Pancreas (tissue), 10 donors: ENCODE measurements at regions of chr1 and their contacts with region 1.

Region 1: GRCh38 chr1:1291548-1292441 is 11.6 kb downstream of the SCNN1D start:
- DNase-seq: peak; percentile 73 to 94 (median 82)
- ATAC-seq: peak; percentile 84 to 91 (median 88)
- H3K4me3 ChIP-seq: no peak overlapping the region
- H3K27ac ChIP-seq: no peak overlapping the region
- H3K4me1 ChIP-seq: no peaks in the 10 kb centered on the region
- H3K27me3 ChIP-seq: no peaks in the 10 kb centered on the region
- CTCF ChIP-seq: peak; percentile 63 to 71 (median 64)

Region 2: DNA sequence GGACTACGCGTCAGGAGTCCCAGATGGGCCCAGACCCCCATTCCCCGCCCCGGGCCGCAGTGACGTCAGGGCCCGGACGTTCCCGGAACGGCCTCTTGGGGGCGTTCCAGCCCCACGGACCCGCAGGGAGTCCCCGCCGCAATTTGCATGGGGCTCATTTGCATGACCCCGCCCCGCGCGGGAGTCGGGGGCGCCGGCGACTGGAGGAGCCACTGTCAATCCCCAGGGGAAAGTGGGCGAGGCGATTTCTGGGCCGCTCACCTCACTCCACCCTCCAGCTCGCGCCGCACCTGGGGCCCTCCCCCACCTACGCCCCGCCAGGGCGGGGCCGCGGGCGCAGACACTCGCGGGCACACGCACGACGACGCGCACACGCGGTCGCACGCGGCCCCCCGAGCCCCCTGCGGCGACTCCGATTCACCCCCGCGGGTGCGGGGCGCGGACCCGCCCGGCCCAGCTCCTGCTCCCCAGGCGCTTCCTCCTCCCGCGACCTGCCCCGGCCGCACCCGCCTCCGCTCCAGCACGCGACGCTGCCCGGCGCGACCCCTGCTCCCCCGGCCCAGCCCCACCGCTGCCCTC is 258.7 kb before region 1 on chr1:
- intact Hi-C with region 1: loop called in 1 of 3 experiments (anchors 10 kb)
- DNase-seq: peak; percentile 88 to 94 (median 92)
- ATAC-seq: peak; percentile 89 to 96 (median 91)
- H3K4me3 ChIP-seq: peak overlapping the region in 3 of 4 donors; percentile 11 to 49 (median 42)
- H3K27ac ChIP-seq: no peak overlapping the region
- H3K4me1 ChIP-seq: peaks cover 0 to 4% (median 0%) of the 10 kb centered on the region in 3 donors
- H3K27me3 ChIP-seq: no peaks in the 10 kb centered on the region
- CTCF ChIP-seq: peak; percentile 58 to 77 (median 67)

Region 3: GRCh38 chr1:1122078-1122811 is 169.6 kb before region 1 on chr1:
- intact Hi-C with region 1: loop called (anchors 5 to 10 kb)
- DNase-seq: peak; percentile 74 to 96 (median 87)
- ATAC-seq: peak; percentile 89 to 94 (median 93)
- H3K4me3 ChIP-seq: peak overlapping the region in 1 of 4 donors; percentile 13
- H3K27ac ChIP-seq: no peak overlapping the region
- H3K4me1 ChIP-seq: peaks cover 10 to 12% (median 11%) of the 10 kb centered on the region in 3 donors
- H3K27me3 ChIP-seq: no peaks in the 10 kb centered on the region
- CTCF ChIP-seq: peak; percentile 82 to 88 (median 86)

Region 4: GRCh38 chr1:1144122-1144842 is 147.5 kb before region 1 on chr1:
- intact Hi-C with region 1: no loop called
- DNase-seq: no peak
- ATAC-seq: peak; percentile 39 to 83 (median 74)
- H3K4me3 ChIP-seq: no peak overlapping the region
- H3K27ac ChIP-seq: peak overlapping the region in 2 of 4 donors; percentile 31 to 62
- H3K4me1 ChIP-seq: no peaks in the 10 kb centered on the region
- H3K27me3 ChIP-seq: no peaks in the 10 kb centered on the region
- CTCF ChIP-seq: no peak

Region 5: GRCh38 chr1:1374929-1375662 is 83.3 kb after region 1 on chr1 and contains the start of gene AURKAIP1:
- intact Hi-C with region 1: no loop called
- DNase-seq: peak; percentile 96 to 99 (median 99)
- ATAC-seq: peak; percentile 90 to 96 (median 92)
- H3K4me3 ChIP-seq: peak within 1 kb of the TSS; percentile 95 to 100 (median 96)
- H3K27ac ChIP-seq: peak within 1 kb of the TSS; percentile 87 to 93 (median 92)
- H3K4me1 ChIP-seq: peaks cover 6 to 26% (median 13%) of the 10 kb centered on the region in 3 donors
- H3K27me3 ChIP-seq: no peaks in the 10 kb centered on the region
- CTCF ChIP-seq: peak in 1 of 4 donors; percentile 20
- total RNA-seq, gene AURKAIP1: 52.8 to 83.8 (median 57.7) TPM